ENCODE measurements at regions of chr7 and their contacts with region 1.

Region 1: DNA sequence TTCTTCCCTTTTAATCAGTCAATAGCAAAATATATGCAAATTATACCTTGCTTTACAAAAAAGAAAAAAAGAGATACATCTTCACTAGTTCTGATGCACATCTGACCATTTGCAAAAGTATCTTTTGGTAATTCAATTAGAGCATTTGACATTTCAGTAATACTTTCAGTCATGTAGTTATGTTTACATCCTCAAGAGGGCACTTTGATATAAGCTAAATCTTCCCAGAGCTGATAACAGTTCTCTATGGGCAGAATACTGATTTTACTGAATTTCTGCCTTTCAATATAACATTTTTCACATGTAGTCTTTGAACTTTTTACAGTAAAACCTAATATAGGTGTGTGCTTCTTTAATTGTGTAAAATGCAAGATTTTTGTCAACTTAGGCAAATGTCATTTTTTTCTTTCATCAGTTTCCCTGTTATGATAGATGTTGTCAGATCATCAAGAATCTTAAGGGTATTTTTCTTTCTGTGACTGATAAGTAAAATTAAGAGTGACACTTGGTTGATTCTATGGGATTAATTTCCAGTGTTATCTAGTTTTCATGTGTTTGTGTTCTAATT is 703.5 kb upstream of the SEMA3D start:
- DNase-seq: peak; percentile 47
- ATAC-seq: peak; percentile 63
- H3K4me3 ChIP-seq: no peak overlapping the region
- H3K27ac ChIP-seq: no peak overlapping the region
- H3K4me1 ChIP-seq: no peaks in the 10 kb centered on the region
- H3K27me3 ChIP-seq: peaks cover 22% of the 10 kb centered on the region; the same call in 1 of the 2 replicates
- CTCF ChIP-seq: peak; percentile 72

Region 2: DNA sequence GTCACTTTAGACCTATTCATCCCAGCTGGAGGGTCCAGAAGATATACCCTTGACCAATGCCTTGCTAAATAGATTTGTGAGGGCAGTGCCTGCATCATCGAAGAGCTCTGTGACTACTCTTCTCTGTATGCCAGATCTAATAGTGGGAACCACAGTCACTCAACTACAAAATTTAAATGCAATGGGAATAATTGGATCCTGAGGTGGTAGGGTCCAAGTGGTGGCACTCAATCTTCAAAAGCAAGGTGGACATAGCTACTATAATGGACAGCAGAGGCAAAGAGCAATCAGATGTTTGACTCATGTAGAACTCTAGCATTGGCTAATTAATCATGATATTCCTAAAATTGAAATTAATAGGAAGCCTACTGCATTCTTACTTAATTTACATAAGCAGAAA is 199.1 kb after region 1 on chr7:
- CTCF ChIA-PET with region 1: no interaction called
- POLR2A ChIA-PET with region 1: no interaction called
- intact Hi-C with region 1: no loop called
- DNase-seq: no peak
- ATAC-seq: no peak
- H3K4me3 ChIP-seq: no peak overlapping the region
- H3K27ac ChIP-seq: no peak overlapping the region
- H3K4me1 ChIP-seq: no peaks in the 10 kb centered on the region
- H3K27me3 ChIP-seq: no peaks in the 10 kb centered on the region
- CTCF ChIP-seq: no peak

Region 3: GRCh38 chr7:86469680-86470295 is 579.5 kb after region 1 on chr7:
- CTCF ChIA-PET with region 1: interaction called, 6 read pairs
- POLR2A ChIA-PET with region 1: no interaction called
- intact Hi-C with region 1: loop called (anchors 1 kb)
- DNase-seq: peak; percentile 84
- ATAC-seq: peak; percentile 85
- H3K4me3 ChIP-seq: no peak overlapping the region
- H3K27ac ChIP-seq: no peak overlapping the region
- H3K4me1 ChIP-seq: no peaks in the 10 kb centered on the region
- H3K27me3 ChIP-seq: peaks cover 17% of the 10 kb centered on the region
- CTCF ChIP-seq: peak; percentile 82

Region 4: DNA sequence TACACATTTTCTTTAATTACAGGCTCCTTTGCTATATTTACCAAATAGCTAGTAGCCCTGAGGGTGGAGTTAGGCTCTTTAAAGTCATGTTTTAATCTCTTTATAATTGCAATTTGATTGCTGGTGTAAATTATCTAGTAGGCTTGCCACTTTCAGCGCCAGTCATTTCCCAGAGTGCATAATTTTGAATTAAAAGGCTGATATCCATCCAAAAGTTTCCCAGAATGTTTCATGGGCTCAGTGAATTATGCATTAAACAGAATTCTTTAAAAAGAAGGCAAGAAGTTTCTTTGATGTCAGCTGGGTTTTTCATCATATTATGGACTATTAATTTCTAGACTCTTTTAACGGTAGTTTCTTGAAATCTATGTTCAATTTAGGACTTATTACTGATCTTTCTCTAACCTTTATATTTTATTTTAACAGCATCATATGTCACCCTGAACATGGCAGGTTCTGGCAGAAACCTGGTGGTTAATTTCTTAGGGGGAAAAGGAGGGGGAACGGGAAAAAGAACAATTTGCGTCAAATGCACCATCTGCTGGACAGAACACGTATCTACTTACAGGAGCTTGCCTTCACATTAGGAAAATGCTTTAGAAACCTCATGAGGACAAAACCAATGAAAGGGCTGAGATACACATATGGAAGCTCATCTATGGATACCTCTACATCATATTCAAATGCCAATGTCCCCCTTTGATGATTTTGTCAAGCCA is 924.5 kb after region 1 on chr7:
- CTCF ChIA-PET with region 1: interaction called, 3 read pairs
- POLR2A ChIA-PET with region 1: interaction called, 3 read pairs
- intact Hi-C with region 1: loop called (anchors 1 kb)
- DNase-seq: peak; percentile 38
- ATAC-seq: peak; percentile 73
- H3K4me3 ChIP-seq: no peak overlapping the region
- H3K27ac ChIP-seq: no peak overlapping the region
- H3K4me1 ChIP-seq: no peaks in the 10 kb centered on the region
- H3K27me3 ChIP-seq: peaks cover 41% of the 10 kb centered on the region
- CTCF ChIP-seq: peak; percentile 67